ENCODE measurements at regions of chr20 and their contacts with region 1.

Region 1: GRCh38 chr20:5621305-5621704 is 128.9 kb upstream of the SHLD1 start:
- DNase-seq: peak; percentile 40 to 71 (median 68)
- ATAC-seq: peak; percentile 69
- H3K4me3 ChIP-seq: no peak overlapping the region
- H3K27ac ChIP-seq: peak overlapping the region in 1 of 4 donors; percentile 34
- H3K4me1 ChIP-seq: no peaks in the 10 kb centered on the region
- H3K27me3 ChIP-seq: no peaks in the 10 kb centered on the region
- CTCF ChIP-seq: no peak
- POLR2A ChIP-seq: no peak

Region 2: GRCh38 chr20:5749952-5750779 is 128.9 kb after region 1 on chr20 and contains the start of gene SHLD1:
- intact Hi-C with region 1: loop called (anchors 10 kb)
- DNase-seq: peak; percentile 83 to 88 (median 84)
- ATAC-seq: peak; percentile 89
- H3K4me3 ChIP-seq: peak within 1 kb of the TSS; percentile 6 to 34
- H3K27ac ChIP-seq: peak within 1 kb of the TSS; percentile 78 to 93 (median 88)
- H3K4me1 ChIP-seq: peaks cover 19% of the 10 kb centered on the region
- H3K27me3 ChIP-seq: no peaks in the 10 kb centered on the region
- CTCF ChIP-seq: no peak
- POLR2A ChIP-seq: peak in 2 of 3 donors; percentile 6 to 32
- total RNA-seq, gene SHLD1: 1.8 TPM in 1 of 2 donors, not detected in the other

Region 3: GRCh38 chr20:5863040-5863833 is 241.9 kb after region 1 on chr20:
- intact Hi-C with region 1: no loop called
- DNase-seq: peak; percentile 45 to 77 (median 67)
- ATAC-seq: peak; percentile 42
- H3K4me3 ChIP-seq: no peak overlapping the region
- H3K27ac ChIP-seq: peak overlapping the region in 3 of 4 donors; percentile 0 to 57 (median 32)
- H3K4me1 ChIP-seq: peaks cover 37% of the 10 kb centered on the region
- H3K27me3 ChIP-seq: no peaks in the 10 kb centered on the region
- CTCF ChIP-seq: no peak
- POLR2A ChIP-seq: no peak

Region 4: GRCh38 chr20:6115221-6115895 is 494.1 kb after region 1 on chr20:
- intact Hi-C with region 1: no loop called
- DNase-seq: no peak
- ATAC-seq: no peak
- H3K4me3 ChIP-seq: no peak overlapping the region
- H3K27ac ChIP-seq: no peak overlapping the region
- H3K4me1 ChIP-seq: no peaks in the 10 kb centered on the region
- H3K27me3 ChIP-seq: no peaks in the 10 kb centered on the region
- CTCF ChIP-seq: no peak
- POLR2A ChIP-seq: no peak

Measured in body of pancreas (tissue), 4 donors.